ENCODE measurements at regions of chr12 and their contacts with region 1.

Region 1: DNA sequence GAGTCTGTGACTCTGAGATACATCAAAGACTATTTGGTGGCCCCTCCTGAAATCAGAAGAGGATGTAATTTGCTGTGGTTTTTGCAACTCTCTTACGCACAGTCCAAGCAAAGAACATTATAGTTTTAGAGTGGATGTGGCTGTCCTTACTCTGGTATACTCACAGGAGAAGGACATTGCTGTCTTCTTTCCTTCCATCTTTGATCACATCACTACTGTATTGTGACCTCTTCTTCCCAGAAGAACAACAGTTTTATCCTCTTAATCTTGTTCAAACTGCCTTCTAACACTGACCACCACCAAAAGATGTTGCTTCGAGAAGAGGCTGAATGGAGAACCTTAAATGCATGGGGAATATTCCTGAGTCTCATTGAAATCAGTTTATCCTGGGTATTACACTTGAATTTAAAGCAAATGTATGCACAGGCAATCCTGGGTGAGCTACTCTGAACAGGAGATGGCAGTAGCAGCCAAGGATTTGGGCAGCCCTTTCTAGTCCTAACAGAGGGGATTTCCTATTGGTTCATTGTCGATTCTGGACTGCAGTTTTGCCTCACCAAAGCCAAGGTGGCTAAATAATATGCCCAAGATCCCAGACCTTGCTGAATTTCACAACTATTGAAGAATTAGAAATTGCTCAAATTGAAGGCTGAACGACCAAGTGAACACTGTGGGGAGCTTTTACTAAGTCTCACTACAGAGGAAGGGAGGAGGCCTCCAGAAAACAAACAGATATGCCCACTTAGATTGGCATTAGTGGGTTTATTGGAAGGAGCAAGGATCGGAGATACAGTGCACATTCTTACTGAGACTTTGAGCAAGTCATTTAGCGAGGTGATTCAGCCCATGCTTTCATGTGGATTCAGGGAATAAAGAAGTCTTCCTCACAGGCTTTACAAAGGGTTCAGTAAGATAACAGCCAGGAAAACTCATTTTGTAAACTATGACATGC is 282.8 kb downstream of the PAWR start:
- DNase-seq: peak; percentile 91

Region 2: DNA sequence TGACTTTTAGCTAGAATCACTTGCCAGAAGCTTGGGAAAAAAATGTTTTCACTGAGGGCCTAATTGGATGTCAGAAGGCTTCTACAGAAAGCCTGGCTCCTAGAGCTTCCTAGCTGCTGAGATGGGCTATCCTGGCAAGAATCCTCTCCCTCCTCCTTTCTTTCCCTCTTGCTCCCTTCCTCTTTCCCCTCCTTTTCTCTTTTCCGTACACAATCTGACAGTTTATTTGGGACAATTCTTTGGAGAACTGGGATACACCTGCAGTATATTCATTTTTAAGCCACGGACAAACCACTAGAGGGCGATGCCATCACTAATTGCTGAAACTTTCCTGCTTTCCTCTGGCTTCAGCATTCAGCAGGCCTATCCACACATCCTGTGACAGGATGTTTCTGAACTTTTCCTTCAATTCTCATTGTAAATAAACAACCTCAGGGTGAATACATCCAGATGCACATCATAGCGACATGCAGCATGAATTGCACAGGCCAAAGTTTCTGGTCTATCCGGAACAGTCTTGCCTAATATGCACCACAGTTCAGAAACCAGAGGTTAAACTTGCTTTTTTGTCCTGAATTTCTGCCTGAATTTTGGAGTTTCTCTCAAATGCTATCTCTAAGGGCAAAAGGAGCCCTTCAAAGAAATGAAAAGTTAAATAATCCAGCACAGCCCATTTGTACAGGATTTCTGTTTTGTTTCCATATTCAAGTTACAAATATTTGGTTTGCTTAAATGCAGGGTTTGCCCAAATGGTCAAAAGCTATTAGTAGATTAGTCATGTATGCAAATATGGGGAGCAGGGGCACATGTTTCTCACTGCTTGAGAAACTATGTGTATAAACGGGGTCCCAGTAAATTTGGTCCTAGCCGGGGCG is 140.0 kb after region 1 on chr12:
- in situ Hi-C with region 1: loop called (anchors 25 kb)
- DNase-seq: peak; percentile 88

Region 3: DNA sequence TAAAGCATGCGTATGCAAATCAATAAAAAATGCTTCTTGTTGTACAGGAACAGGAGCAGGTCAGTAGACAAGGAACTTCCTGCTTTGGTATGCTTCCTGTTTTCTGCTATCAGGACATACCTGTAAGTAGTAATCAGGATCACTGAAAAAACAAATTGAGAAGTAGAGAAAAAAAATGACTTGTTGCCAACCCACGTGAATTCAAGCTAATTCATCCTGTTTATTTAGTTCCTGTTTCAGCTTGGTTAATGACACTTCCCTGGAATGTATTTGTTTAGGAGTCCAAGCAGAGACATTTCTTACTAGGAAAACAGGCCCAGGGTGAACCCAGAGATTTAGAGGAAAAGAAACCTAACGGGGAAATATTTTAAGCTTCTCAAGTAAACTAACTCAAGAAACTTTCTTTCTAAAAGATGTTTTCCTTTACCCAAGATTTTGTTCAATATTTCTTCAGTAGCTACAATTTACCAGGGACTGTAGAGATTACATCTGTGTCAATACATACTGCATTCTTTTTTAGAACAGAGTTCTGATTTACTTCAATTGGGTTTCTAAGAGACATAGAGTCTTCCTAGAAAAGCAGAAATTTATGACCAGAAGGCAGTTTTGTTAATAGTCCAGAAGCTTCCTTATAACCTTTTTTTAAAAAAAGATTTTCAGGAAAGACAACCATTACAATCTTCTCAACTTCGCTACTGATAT is 158.7 kb after region 1 on chr12:
- in situ Hi-C with region 1: no loop called
- DNase-seq: no peak

Region 4: GRCh38 chr12:80186727-80187217 is 778.8 kb after region 1 on chr12:
- in situ Hi-C with region 1: loop called (anchors 25 kb)
- DNase-seq: peak; percentile 93

Measured in ACHN (cell line).